ENCODE measurements at regions of chr12 and their contacts with region 1.

Region 1: DNA sequence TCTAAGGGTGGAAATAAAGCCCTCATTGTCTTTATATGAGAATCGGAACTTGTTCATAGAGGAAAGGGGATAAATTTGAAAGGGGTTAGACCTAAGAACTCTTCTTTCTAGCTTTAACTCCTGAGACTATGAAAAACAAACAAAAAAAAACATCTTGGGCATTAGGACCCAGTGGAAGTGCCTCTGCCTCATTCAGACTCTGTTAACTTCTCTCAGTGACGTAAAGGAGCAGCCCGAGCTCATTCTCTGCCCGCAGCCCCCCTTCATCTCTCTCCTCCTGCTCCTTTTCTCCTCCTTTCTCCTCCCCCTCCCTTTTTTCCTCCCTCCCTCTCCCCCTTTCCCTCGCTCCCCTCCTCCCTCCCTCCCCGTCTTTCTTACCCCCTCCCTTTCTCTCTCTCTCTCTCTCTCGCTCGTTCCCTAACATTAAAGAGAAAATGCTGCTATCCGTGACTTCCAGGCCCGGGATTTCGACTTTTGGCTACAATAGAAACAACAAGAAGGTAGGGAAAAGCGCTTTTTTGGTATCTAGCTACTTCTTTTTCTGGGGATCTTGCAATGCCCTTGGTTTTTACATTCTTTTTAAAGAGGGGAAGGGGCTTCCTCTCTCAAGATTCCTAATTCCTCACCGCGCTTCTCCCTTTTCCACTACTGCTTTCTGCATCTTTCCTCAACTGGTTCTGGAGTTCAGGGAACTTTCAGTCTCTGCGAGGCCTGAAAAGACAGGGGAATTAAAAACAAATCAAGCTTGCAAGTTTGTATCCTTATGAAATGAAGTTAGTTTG is at the start of gene RBMS2:
- DNase-seq: peak; percentile 17 to 68 (median 50)
- H3K4me3 ChIP-seq: peak within 1 kb of the TSS; percentile 63
- H3K4me3 Mint-ChIP-seq: peak within 1 kb of the TSS; percentile 88 to 95 (median 91)
- H3K27ac ChIP-seq: peak within 1 kb of the TSS; percentile 32
- H3K27ac Mint-ChIP-seq: peak within 1 kb of the TSS; percentile 79 to 96 (median 92)
- H3K4me1 ChIP-seq: peaks cover 29% of the 10 kb centered on the region
- H3K4me1 Mint-ChIP-seq: peaks cover 22 to 37% (median 23%) of the 10 kb centered on the region in 3 donors
- H3K27me3 ChIP-seq: no peaks in the 10 kb centered on the region
- H3K27me3 Mint-ChIP-seq: peaks cover 0 to 3% of the 10 kb centered on the region in 2 donors
- total RNA-seq, gene RBMS2: 3.5 to 4.7 TPM

Region 2: DNA sequence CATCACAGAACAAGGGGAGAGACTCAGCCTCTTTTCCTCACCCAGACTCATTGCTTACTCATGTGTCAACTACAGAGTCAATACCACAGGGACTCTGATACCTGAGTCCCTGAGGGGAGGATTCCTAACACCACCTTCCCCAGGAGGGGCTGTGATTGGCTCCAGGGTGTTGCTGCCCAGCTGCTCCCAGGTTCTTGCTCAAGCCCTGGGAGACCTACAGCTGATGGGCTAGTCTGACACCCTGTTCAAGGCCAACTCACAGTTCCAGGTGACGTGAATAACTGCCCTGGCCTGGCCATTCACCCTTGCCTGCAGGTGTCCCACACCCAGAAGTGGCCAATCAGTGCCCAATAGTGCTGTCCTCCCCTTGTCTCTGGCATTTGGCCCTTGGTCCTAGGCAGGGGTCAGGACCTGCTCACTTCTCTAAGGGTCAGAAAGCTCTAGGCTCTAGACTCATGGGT is 44.8 kb before region 1 on chr12:
- CTCF ChIA-PET with region 1: no interaction called
- POLR2A ChIA-PET with region 1: no interaction called
- DNase-seq: no peak
- H3K4me3 ChIP-seq: no peak overlapping the region
- H3K4me3 Mint-ChIP-seq: no peak overlapping the region
- H3K27ac ChIP-seq: no peak overlapping the region
- H3K27ac Mint-ChIP-seq: peak overlapping the region in 4 of 8 donors; percentile 17 to 43 (median 18)
- H3K4me1 ChIP-seq: no peaks in the 10 kb centered on the region
- H3K4me1 Mint-ChIP-seq: peaks cover 0 to 8% (median 2%) of the 10 kb centered on the region in 3 donors
- H3K27me3 ChIP-seq: no peaks in the 10 kb centered on the region
- H3K27me3 Mint-ChIP-seq: no peaks in the 10 kb centered on the region

Region 3: DNA sequence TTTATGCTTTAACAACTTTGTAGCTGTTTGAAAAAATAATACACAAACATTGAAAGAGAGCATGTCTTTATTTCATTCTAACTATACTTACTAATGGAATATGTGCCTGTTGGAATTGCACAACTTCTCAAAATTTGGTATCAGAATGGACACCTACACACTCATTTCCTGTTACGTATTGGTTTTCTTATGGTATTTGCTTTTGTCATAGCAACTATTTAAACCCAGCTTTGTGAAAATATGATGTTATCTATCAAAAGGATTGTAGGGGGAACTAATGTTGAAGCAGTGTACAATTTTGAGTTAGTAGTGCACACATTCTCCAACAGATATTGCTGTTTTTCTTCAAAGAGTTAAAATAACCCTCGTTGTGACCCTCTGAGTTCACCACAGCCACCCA is 52.4 kb after region 1 on chr12:
- CTCF ChIA-PET with region 1: interaction called, 13 read pairs
- POLR2A ChIA-PET with region 1: no interaction called
- DNase-seq: no peak
- H3K4me3 ChIP-seq: no peak overlapping the region
- H3K4me3 Mint-ChIP-seq: no peak overlapping the region
- H3K27ac ChIP-seq: no peak overlapping the region
- H3K27ac Mint-ChIP-seq: no peak overlapping the region
- H3K4me1 ChIP-seq: peaks cover 18% of the 10 kb centered on the region
- H3K4me1 Mint-ChIP-seq: peaks cover 5 to 14% (median 7%) of the 10 kb centered on the region in 3 donors
- H3K27me3 ChIP-seq: no peaks in the 10 kb centered on the region
- H3K27me3 Mint-ChIP-seq: no peaks in the 10 kb centered on the region

Region 4: GRCh38 chr12:56616925-56617324 is 95.1 kb after region 1 on chr12:
- CTCF ChIA-PET with region 1: no interaction called
- POLR2A ChIA-PET with region 1: no interaction called
- DNase-seq: no peak
- H3K4me3 ChIP-seq: no peak overlapping the region
- H3K4me3 Mint-ChIP-seq: no peak overlapping the region
- H3K27ac ChIP-seq: no peak overlapping the region
- H3K27ac Mint-ChIP-seq: peak overlapping the region in 3 of 8 donors; percentile 21 to 78 (median 74)
- H3K4me1 ChIP-seq: peaks cover 5% of the 10 kb centered on the region
- H3K4me1 Mint-ChIP-seq: peaks cover 25 to 42% (median 34%) of the 10 kb centered on the region in 3 donors
- H3K27me3 ChIP-seq: no peaks in the 10 kb centered on the region
- H3K27me3 Mint-ChIP-seq: no peaks in the 10 kb centered on the region